ENCODE measurements at regions of chr13 and their contacts with region 1.

Region 1: GRCh38 chr13:102947745-102948405 is 102.0 kb downstream of the ERCC5 start:
- DNase-seq: peak; percentile 36 to 95 (median 69)

Region 2: DNA sequence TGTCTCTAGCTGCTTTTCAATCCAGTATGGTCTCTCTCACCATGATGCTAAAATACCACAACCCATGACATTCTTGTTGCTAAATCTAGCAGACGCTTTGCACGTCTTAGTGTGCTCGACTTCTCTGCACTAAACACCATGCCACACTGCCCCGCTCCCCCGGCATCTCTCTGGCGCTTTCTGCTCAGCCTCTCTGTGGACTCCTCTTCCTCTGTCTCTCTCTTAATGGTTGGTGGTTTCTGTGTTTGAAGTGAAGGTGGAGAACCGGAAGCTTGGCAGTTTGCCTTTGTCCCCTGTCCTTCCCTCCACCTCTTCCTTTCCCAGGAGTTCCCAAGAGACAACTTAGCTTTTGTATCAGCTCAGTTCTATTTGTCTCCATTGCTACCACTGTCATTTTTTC is 93.2 kb before region 1 on chr13:
- intact Hi-C with region 1: no loop called
- DNase-seq: no peak

Region 3: DNA sequence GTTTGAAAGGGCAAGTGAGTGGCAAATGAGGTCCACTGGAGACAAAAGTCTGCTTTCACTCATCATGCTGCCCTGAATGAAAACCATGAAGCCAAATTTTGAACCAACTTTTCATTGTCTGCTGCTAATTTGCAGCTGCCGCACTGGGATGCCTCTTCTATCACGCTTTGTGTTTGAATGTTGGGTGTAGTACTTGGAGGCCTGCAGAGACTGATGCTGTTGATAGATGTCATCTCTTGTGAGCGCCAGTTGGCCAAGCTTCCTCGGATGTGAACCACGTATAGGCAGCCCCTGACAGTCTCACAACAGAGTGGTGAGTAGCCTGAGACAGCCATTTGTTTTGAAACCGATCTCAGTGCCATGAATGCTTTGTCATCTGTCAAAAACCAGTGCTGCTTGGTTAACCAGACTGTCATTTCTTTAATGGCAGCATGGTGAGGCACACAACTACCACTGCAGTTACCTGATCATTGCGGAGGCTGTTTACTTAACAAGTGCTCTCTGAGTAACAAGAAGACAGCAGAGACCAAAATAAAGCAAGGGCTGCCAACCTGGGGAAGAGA is 149.6 kb after region 1 on chr13:
- intact Hi-C with region 1: loop called (anchors 1 kb)
- DNase-seq: peak in 8 of 10 donors; percentile 11 to 93 (median 60)